ENCODE measurements at regions of chr2 and their contacts with region 1.

Region 1: DNA sequence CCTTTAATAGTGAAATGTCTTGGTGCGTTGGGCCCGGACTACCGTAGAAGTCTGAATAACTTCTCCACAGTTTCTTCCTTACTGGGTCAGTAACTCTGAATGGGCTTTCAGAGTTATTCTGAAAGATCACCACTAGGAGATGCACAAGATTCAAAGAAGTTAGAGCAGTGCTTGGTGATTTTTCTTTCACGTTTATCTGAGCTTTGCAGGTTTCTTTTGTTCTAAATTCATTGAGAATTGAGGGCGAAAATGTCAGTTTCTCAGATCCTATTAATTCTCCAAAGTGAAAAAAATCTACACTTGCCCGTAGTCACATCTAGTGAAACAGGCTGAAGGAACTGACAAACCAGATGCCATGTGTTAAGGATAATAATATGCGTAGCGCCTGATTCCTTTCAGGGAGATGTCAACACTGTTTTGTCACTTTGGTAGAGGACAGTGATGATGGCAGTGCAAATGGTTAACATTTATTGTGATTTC is 70.1 kb downstream of the QPCT start:
- DNase-seq: peak in 2 of 5 donors; percentile 44 to 46
- H3K4me3 ChIP-seq: no peak overlapping the region
- H3K4me3 Mint-ChIP-seq: no peak overlapping the region
- H3K27ac ChIP-seq: no peak overlapping the region
- H3K27ac Mint-ChIP-seq: no peak overlapping the region
- H3K4me1 ChIP-seq: peaks cover 3% of the 10 kb centered on the region
- H3K4me1 Mint-ChIP-seq: peaks cover 15% of the 10 kb centered on the region in 3 donors
- H3K27me3 ChIP-seq: no peaks in the 10 kb centered on the region
- H3K27me3 Mint-ChIP-seq: peaks cover 3 to 7% of the 10 kb centered on the region in 2 donors

Region 2: DNA sequence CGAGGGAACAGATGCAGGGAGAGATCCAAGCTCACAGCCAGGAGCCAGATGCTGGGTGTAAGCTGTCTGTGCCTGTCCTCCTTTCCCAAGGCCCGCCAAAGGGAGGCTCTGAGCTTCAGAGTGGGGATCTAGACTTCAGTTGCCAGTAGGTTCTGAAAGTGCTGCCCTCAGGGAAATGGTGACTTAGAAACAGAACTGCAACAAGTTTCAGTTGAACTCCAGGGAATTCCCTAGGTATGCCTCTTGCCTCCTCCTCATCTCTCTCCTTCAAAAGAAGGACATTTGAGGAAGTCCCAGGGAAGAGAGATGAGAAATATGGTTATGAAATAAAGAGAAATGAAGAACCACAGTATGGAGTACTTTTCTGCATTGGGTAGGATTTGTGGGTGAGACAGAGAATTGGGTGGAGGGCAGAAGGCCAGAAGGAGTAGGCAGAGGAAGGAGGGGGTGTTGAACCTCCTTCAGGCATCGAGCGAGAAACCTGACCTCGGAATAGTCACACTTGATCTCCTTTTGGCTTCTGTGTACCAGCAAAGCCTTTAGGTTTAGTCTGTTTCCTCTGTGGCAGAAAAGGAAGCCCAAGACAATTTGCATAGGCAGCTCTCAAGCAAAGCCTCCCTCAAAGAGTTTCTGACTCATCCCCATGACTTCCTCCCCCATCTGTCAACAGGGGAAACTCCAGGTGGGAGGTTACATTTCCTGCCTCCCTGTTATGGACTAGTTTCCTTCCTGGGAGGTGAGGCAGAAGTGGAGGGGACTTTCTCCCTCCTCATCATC is 24.3 kb before region 1 on chr2:
- CTCF ChIA-PET with region 1: interaction called, 13 read pairs
- POLR2A ChIA-PET with region 1: no interaction called
- DNase-seq: peak; percentile 20 to 76 (median 55)
- H3K4me3 ChIP-seq: peak overlapping the region; percentile 41
- H3K4me3 Mint-ChIP-seq: peak overlapping the region in 6 of 7 donors; percentile 21 to 72 (median 42)
- H3K27ac ChIP-seq: no peak overlapping the region
- H3K27ac Mint-ChIP-seq: peak overlapping the region in 6 of 8 donors; percentile 81 to 94 (median 88)
- H3K4me1 ChIP-seq: peaks cover 25% of the 10 kb centered on the region
- H3K4me1 Mint-ChIP-seq: peaks cover 0 to 3% (median 0%) of the 10 kb centered on the region in 3 donors
- H3K27me3 ChIP-seq: no peaks in the 10 kb centered on the region
- H3K27me3 Mint-ChIP-seq: peaks cover 0 to under 1% of the 10 kb centered on the region in 2 donors

Region 3: DNA sequence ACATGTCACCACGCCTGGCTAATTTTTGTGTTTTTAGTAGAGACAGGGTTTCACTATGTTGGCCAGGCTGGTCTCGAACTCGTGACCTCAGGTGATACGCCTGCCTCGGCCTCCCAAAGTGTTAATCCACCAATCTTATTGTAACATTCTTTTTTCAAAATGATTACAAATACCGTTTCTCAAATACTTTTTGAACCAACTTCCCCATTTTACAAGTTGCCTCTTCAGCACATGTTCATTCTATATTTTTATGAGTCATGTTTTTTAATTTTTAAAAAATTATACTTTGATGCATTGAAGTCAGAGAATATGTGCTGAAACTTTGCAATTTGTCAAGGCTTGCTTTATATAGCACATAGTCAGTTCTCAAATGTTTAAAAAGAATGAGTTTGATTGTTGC is 11.9 kb before region 1 on chr2:
- CTCF ChIA-PET with region 1: interaction called, 13 read pairs
- POLR2A ChIA-PET with region 1: no interaction called
- DNase-seq: no peak
- H3K4me3 ChIP-seq: no peak overlapping the region
- H3K4me3 Mint-ChIP-seq: no peak overlapping the region
- H3K27ac ChIP-seq: no peak overlapping the region
- H3K27ac Mint-ChIP-seq: no peak overlapping the region
- H3K4me1 ChIP-seq: no peaks in the 10 kb centered on the region
- H3K4me1 Mint-ChIP-seq: no peaks in the 10 kb centered on the region
- H3K27me3 ChIP-seq: no peaks in the 10 kb centered on the region
- H3K27me3 Mint-ChIP-seq: peaks cover 0 to 12% of the 10 kb centered on the region in 2 donors

Region 4: DNA sequence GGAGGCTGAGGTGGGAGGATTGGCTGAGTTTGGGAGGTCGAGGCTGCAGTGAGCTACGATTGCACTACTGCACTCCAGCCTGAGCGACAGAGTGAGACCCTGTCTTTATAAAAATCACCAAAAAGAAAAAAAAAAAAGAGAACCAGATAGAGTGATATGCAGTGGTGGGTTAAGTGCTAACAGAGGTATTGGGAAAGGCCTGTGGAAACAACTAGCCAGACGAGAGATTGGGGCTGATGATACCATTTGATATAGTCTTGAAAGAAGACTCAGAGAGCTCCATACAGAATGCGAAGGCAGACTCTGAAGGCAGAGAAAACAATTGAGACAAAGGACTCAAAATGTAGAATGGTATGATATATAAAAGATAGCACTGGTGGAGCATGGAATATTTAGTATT is 122.8 kb after region 1 on chr2:
- CTCF ChIA-PET with region 1: interaction called, 10 read pairs
- POLR2A ChIA-PET with region 1: no interaction called
- DNase-seq: no peak
- H3K4me3 ChIP-seq: no peak overlapping the region
- H3K4me3 Mint-ChIP-seq: no peak overlapping the region
- H3K27ac ChIP-seq: no peak overlapping the region
- H3K27ac Mint-ChIP-seq: peak overlapping the region in 1 of 8 donors; percentile 37
- H3K4me1 ChIP-seq: no peaks in the 10 kb centered on the region
- H3K4me1 Mint-ChIP-seq: peaks cover 0 to 6% (median 2%) of the 10 kb centered on the region in 3 donors
- H3K27me3 ChIP-seq: no peaks in the 10 kb centered on the region
- H3K27me3 Mint-ChIP-seq: no peaks in the 10 kb centered on the region

Region 5: GRCh38 chr2:37648331-37649011 is 234.0 kb after region 1 on chr2:
- CTCF ChIA-PET with region 1: interaction called, 25 read pairs
- POLR2A ChIA-PET with region 1: no interaction called
- DNase-seq: peak; percentile 29 to 73 (median 43)
- H3K4me3 ChIP-seq: peak overlapping the region; percentile 33
- H3K4me3 Mint-ChIP-seq: peak overlapping the region; percentile 63 to 88 (median 83)
- H3K27ac ChIP-seq: peak overlapping the region; percentile 49
- H3K27ac Mint-ChIP-seq: peak overlapping the region; percentile 92 to 98 (median 95)
- H3K4me1 ChIP-seq: peaks cover 82% of the 10 kb centered on the region
- H3K4me1 Mint-ChIP-seq: peaks cover 93 to 98% (median 98%) of the 10 kb centered on the region in 3 donors
- H3K27me3 ChIP-seq: no peaks in the 10 kb centered on the region
- H3K27me3 Mint-ChIP-seq: peaks cover 0 to 3% of the 10 kb centered on the region in 2 donors

Region 6: DNA sequence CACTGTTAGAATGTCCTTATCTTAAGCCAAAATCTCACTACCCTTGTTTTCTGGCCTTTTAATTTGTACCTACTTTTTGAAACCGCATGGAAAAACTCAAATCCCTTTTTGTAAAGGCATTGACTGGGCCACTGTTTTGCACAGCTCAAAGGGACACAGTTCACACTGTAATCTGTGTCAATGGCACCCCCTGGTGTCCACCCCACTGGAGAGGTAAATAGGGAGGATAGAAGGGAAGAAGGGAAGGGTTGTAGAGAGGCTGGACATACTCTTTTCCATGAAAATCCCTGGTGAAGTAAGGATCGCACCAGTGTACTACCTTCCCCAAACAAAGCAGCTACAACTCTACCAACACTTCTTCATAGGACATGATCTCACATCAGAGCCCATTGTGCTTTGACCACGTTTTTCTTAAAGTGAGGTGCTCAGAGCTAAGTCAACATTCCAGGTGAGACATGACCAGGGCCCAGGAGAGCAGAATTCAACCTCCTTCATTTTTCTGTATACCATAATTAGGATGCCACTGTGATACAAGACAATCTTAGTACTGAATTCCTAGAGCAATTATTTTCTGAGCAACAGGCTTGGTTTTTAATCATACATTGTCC is 418.2 kb after region 1 on chr2:
- CTCF ChIA-PET with region 1: interaction called, 213 read pairs
- POLR2A ChIA-PET with region 1: no interaction called
- DNase-seq: peak; percentile 57 to 88 (median 76)
- H3K4me3 ChIP-seq: no peak overlapping the region
- H3K4me3 Mint-ChIP-seq: no peak overlapping the region
- H3K27ac ChIP-seq: no peak overlapping the region
- H3K27ac Mint-ChIP-seq: no peak overlapping the region
- H3K4me1 ChIP-seq: no peaks in the 10 kb centered on the region
- H3K4me1 Mint-ChIP-seq: peaks cover 5 to 14% (median 9%) of the 10 kb centered on the region in 3 donors
- H3K27me3 ChIP-seq: no peaks in the 10 kb centered on the region
- H3K27me3 Mint-ChIP-seq: peaks cover 0 to 3% of the 10 kb centered on the region in 2 donors

Region 7: DNA sequence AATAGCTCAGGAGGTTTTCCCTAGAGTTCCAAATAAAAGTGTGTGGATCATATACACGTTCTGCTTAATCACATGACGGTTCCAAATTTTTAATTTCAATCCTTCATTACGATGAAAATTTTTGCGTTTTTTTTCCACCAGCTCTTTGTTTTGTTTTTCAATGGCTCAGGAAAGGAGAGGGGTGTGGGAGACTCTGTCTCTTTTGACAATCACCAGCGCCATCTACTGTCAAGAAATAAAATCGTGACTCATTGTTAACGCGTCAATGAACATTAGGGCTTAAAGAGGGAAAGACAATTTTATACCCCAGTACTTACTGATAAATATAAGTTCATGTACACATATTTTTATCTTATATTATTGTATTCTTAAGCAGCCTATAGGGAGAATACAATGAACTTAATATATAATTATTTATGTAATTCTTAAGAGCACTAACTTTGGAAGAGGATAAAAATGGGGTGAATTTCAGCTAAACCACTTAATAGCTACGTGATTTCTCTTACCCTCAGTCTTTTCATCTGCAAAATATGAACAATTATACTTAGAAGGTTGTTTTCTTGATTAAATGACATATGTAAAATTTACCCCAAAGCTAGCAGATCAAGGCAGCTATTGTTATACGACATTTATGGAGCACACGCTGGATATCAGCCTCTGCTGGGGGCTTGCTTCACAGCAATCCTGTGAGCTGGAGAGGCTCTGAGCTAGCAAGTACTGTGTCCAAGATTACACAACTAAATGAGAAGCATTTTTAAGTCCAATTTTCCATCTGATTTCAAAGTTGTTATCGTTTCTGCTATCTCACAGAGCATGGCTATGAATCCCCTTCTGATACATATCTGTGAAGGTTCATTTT is 463.2 kb after region 1 on chr2:
- CTCF ChIA-PET with region 1: interaction called, 71 read pairs
- POLR2A ChIA-PET with region 1: no interaction called
- DNase-seq: peak in 3 of 5 donors; percentile 12 to 45 (median 41)
- H3K4me3 ChIP-seq: no peak overlapping the region
- H3K4me3 Mint-ChIP-seq: no peak overlapping the region
- H3K27ac ChIP-seq: no peak overlapping the region
- H3K27ac Mint-ChIP-seq: no peak overlapping the region
- H3K4me1 ChIP-seq: no peaks in the 10 kb centered on the region
- H3K4me1 Mint-ChIP-seq: no peaks in the 10 kb centered on the region
- H3K27me3 ChIP-seq: no peaks in the 10 kb centered on the region
- H3K27me3 Mint-ChIP-seq: peaks cover 2 to 32% of the 10 kb centered on the region in 2 donors

Region 8: GRCh38 chr2:38045811-38046210 is 631.3 kb after region 1 on chr2:
- CTCF ChIA-PET with region 1: no interaction called
- POLR2A ChIA-PET with region 1: no interaction called
- DNase-seq: no peak
- H3K4me3 ChIP-seq: no peak overlapping the region
- H3K4me3 Mint-ChIP-seq: no peak overlapping the region
- H3K27ac ChIP-seq: no peak overlapping the region
- H3K27ac Mint-ChIP-seq: no peak overlapping the region
- H3K4me1 ChIP-seq: no peaks in the 10 kb centered on the region
- H3K4me1 Mint-ChIP-seq: no peaks in the 10 kb centered on the region
- H3K27me3 ChIP-seq: no peaks in the 10 kb centered on the region
- H3K27me3 Mint-ChIP-seq: peaks cover 12 to 49% of the 10 kb centered on the region in 2 donors